Mucosa of descending colon (tissue), 3 donors: ENCODE measurements at regions of chr9 and their contacts with region 1.

Region 1: DNA sequence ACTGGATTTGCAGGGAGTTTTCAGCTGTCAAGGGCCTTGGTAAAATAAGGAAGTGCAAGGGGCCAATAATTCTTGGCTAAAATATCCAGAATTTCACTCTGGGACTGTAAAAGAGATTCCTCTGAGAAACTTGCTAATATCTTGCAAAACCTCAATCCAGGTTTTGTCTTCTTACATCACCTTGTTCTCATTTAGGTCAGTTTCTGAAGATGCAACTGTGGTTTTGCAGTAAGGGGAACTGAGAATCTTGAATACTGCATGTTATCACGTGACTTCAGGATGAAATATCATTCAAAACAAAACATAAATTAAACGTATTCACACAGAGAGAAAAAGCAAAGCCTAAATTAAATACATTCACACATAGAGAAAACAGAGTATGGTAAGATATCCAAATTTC is 35.0 kb upstream of the RIC1 start:
- DNase-seq: no peak
- ATAC-seq: peak; percentile 25
- H3K4me3 ChIP-seq: no peak overlapping the region
- H3K4me1 ChIP-seq: no peaks in the 10 kb centered on the region
- CTCF ChIP-seq: no peak

Region 2: GRCh38 chr9:4750023-4750673 is 843.8 kb before region 1 on chr9:
- intact Hi-C with region 1: loop called in 1 of 2 experiments (anchors 10 kb)
- DNase-seq: peak in 1 of 3 donors; percentile 54
- ATAC-seq: peak; percentile 63
- H3K4me3 ChIP-seq: no peak overlapping the region
- H3K4me1 ChIP-seq: no peaks in the 10 kb centered on the region
- CTCF ChIP-seq: peak; percentile 21

Region 3: GRCh38 chr9:5186416-5187169 is 407.3 kb before region 1 on chr9:
- intact Hi-C with region 1: loop called in 1 of 2 experiments (anchors 10 kb)
- DNase-seq: peak in 2 of 3 donors; percentile 39 to 75
- ATAC-seq: peak; percentile 88
- H3K4me3 ChIP-seq: no peak overlapping the region
- H3K4me1 ChIP-seq: no peaks in the 10 kb centered on the region
- CTCF ChIP-seq: peak; percentile 48

Region 4: GRCh38 chr9:5450359-5451091 is 143.4 kb before region 1 on chr9 and contains the start of gene CD274:
- intact Hi-C with region 1: loop called in 1 of 2 experiments (anchors 10 kb)
- DNase-seq: peak; percentile 94 to 95 (median 95)
- ATAC-seq: peak; percentile 100
- H3K4me3 ChIP-seq: peak within 1 kb of the TSS; percentile 21
- H3K4me1 ChIP-seq: peaks cover 9% of the 10 kb centered on the region
- CTCF ChIP-seq: peak; percentile 66
- total RNA-seq, gene CD274: 2.6 to 5.4 (median 3.4) TPM

Region 5: GRCh38 chr9:5748438-5748837 is 154.5 kb after region 1 on chr9:
- intact Hi-C with region 1: no loop called
- DNase-seq: no peak
- ATAC-seq: no peak
- H3K4me3 ChIP-seq: no peak overlapping the region
- H3K4me1 ChIP-seq: no peaks in the 10 kb centered on the region
- CTCF ChIP-seq: no peak